A673 (cell line): ENCODE measurements at regions of chr4 and their contacts with region 1.

Region 1: GRCh38 chr4:7081891-7082471 is 14.1 kb upstream of the GRPEL1 start:
- DNase-seq: peak; percentile 72
- H3K4me3 ChIP-seq: no peak overlapping the region
- H3K27ac ChIP-seq: no peak overlapping the region
- H3K4me1 ChIP-seq: no peaks in the 10 kb centered on the region
- H3K27me3 ChIP-seq: no peaks in the 10 kb centered on the region
- CTCF ChIP-seq: peak; percentile 66

Region 2: GRCh38 chr4:6783053-6783981 is 298.7 kb before region 1 on chr4:
- CTCF ChIA-PET with region 1: no interaction called
- POLR2A ChIA-PET with region 1: interaction called, 11 read pairs
- intact Hi-C with region 1: no loop called
- DNase-seq: peak; percentile 94
- H3K4me3 ChIP-seq: peak overlapping the region; percentile 98
- H3K27ac ChIP-seq: peak overlapping the region; percentile 99
- H3K4me1 ChIP-seq: peaks cover 27% of the 10 kb centered on the region
- H3K27me3 ChIP-seq: no peaks in the 10 kb centered on the region
- CTCF ChIP-seq: peak; percentile 22; the same call in 1 of the 2 replicates

Region 3: DNA sequence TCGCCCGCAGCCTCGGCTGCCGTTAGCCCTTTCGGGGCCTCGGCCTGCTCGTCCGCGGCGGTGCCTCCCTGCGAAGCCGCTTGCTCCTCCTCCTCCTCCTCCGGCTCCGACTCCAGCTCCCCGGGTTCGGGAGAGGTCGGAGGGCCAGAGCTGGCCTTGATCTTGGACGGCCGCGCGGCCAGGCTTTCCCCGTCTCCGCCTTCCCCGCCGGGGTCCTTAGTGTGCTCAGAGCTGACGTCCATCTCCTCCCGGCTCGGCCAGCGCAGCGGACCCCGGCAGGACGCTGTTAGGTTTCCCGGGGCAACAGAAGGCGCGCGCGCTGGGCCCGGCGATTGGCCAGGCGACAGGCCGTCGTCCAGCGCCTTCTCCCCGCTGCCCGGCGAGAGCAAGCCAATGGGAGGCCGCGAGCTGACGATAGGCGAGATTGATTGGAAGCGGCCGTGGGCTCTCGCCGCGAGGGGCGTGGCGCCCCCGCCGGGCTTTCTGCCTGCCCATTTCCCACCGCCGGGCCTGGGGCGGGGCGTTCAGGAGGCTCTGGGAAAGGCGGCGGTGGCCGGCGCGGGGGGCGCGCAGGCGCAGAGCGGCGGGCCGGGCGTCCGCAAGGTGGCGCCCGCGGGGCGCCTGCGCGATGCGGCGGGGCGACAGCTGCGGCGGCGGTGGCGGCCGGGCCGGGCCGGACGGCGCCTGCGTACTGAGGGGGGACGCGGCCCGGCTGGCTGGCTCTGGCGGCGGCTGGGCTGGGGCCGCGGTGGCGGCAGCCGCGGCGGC is 39.1 kb before region 1 on chr4 and contains the start of gene TADA2B:
- CTCF ChIA-PET with region 1: interaction called, 10 read pairs
- POLR2A ChIA-PET with region 1: no interaction called
- intact Hi-C with region 1: no loop called
- DNase-seq: peak; percentile 98
- H3K4me3 ChIP-seq: peak within 1 kb of the TSS; percentile 99
- H3K27ac ChIP-seq: peak within 1 kb of the TSS; percentile 85
- H3K4me1 ChIP-seq: peaks cover 16% of the 10 kb centered on the region
- H3K27me3 ChIP-seq: no peaks in the 10 kb centered on the region
- CTCF ChIP-seq: peak; percentile 23; the same call in 1 of the 2 replicates
- total RNA-seq, gene TADA2B: 15.2 and 15.4 TPM in 2 replicates